Activated CD4-positive, alpha-beta memory T cell treated with anti-CD3 and anti-CD28 coated beads for 36 hours (primary cell): ENCODE measurements at regions of chr20 and their contacts with region 1.

Region 1: DNA sequence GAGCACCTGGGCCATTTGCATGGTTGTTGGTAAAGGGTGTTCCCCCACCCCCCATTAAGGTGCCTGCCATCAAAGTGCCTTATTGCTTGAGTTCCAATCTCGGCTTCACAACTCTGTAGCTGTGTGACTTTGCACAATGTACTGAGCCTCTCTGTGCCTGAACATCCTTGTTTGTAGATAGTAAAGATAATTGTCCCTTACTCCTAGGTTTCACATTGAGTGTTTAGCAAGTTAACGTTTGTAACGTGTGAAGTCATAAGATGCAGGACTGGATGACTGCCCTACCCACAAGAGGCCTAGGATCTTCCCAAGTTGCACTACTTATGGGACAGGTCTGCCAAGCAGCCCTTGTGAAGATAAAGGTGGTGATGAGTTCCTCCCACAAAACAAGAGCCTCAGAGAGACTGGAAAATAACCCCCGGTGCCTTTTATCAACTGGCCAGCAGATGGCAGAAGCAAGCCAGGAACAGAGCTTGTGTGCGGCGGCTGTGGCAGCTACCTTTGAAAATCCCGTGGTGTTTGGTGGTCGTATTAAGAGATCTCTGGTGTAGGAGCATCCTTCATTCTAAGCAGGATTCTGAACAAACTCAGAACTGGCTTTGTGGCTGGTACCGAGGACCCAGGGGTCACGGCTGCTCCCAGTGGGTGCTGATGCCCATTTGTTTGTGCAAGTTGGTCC is 99.0 kb downstream of the CDH26 start:
- DNase-seq: peak; percentile 80
- H3K4me3 Mint-ChIP-seq: peak overlapping the region; percentile 79
- H3K27ac Mint-ChIP-seq: peak overlapping the region; percentile 86
- H3K4me1 Mint-ChIP-seq: peaks cover 40% of the 10 kb centered on the region
- H3K27me3 Mint-ChIP-seq: no peaks in the 10 kb centered on the region

Region 2: GRCh38 chr20:59873409-59873808 is 183.9 kb before region 1 on chr20:
- CTCF ChIA-PET with region 1: no interaction called
- POLR2A ChIA-PET with region 1: no interaction called
- intact Hi-C with region 1: no loop called
- DNase-seq: no peak
- H3K4me3 Mint-ChIP-seq: no peak overlapping the region
- H3K27ac Mint-ChIP-seq: no peak overlapping the region
- H3K4me1 Mint-ChIP-seq: no peaks in the 10 kb centered on the region
- H3K27me3 Mint-ChIP-seq: no peaks in the 10 kb centered on the region

Region 3: DNA sequence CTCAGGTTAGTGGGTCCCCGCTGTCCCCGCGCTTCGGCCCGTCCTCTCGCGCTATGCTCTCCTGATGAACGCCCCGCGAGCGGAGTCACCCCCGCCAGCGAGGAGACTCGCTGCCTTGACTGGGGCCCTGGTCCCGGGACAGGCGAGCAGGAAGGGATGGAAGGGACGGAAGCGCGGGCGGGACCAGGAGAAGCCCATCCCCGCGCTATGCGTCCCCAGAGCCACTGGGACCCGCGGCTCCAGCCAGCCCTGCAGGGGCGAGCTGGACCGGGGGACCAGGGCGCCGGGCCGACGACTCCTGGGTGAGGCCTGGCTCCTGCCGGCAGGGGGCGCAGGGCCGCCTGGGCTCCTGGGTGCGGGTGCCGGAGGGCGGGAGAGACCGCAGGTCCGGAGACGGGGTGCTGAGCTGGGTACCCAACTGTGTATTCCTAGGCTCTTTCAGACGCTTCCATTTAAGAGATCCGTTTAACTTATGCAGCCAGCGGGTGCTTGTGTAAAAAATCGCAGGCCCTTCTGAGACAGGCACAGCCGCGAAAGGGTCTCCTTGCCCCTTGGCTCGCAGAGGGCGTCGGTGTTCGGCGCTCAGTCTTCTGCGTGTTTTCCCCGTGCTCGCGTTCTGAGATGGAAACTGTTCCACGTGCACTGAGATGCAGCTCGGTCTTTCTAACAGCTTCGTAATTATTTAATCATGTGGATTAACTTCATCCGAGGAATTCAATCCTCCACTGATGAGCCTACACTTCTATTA is 123.2 kb before region 1 on chr20:
- CTCF ChIA-PET with region 1: interaction called, 12 read pairs
- POLR2A ChIA-PET with region 1: no interaction called
- intact Hi-C with region 1: no loop called
- DNase-seq: peak; percentile 84
- H3K4me3 Mint-ChIP-seq: peak overlapping the region; percentile 69
- H3K27ac Mint-ChIP-seq: peak overlapping the region; percentile 42
- H3K4me1 Mint-ChIP-seq: peaks cover 31% of the 10 kb centered on the region
- H3K27me3 Mint-ChIP-seq: no peaks in the 10 kb centered on the region

Region 4: GRCh38 chr20:60074276-60074675 is 17.0 kb after region 1 on chr20:
- CTCF ChIA-PET with region 1: interaction called, 11 read pairs
- POLR2A ChIA-PET with region 1: no interaction called
- intact Hi-C with region 1: no loop called
- DNase-seq: no peak
- H3K4me3 Mint-ChIP-seq: no peak overlapping the region
- H3K27ac Mint-ChIP-seq: no peak overlapping the region
- H3K4me1 Mint-ChIP-seq: peaks cover 6% of the 10 kb centered on the region
- H3K27me3 Mint-ChIP-seq: no peaks in the 10 kb centered on the region

Region 5: DNA sequence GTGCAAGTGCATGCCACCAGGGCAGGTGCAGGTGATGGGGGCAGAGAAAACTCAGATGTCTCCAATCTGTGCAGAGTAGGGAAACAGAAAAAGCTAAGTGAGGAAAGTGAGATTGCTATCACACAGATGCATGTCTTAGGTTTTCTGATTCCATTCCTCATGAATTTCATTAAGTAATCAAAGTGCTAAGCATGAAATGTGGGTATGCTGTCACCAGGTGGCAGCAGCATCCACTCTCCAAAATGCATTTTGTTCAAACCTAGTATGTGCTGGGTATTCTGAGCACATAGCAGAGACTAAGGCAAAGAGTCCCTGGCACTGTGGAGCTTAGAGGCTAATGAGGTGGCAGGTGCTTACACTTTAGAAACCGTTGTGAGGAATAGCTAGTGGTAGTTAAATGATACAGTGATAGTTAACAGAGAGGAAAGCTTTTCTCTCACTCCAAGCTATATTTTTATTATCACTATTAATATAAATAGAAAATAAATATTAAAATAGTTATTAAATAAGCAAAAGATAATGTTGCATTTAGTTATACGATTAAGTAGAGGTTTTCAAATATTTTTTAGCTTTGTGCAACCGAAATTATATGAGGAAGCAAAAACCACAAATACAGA is 80.5 kb after region 1 on chr20:
- CTCF ChIA-PET with region 1: interaction called, 20 read pairs
- POLR2A ChIA-PET with region 1: no interaction called
- intact Hi-C with region 1: no loop called
- DNase-seq: peak; percentile 55
- H3K4me3 Mint-ChIP-seq: peak overlapping the region; percentile 60
- H3K27ac Mint-ChIP-seq: no peak overlapping the region
- H3K4me1 Mint-ChIP-seq: no peaks in the 10 kb centered on the region
- H3K27me3 Mint-ChIP-seq: no peaks in the 10 kb centered on the region

Region 6: GRCh38 chr20:60262967-60263603 is 205.8 kb after region 1 on chr20:
- CTCF ChIA-PET with region 1: interaction called, 62 read pairs
- POLR2A ChIA-PET with region 1: no interaction called
- intact Hi-C with region 1: loop called (anchors 1 kb)
- DNase-seq: peak; percentile 66
- H3K4me3 Mint-ChIP-seq: no peak overlapping the region
- H3K27ac Mint-ChIP-seq: no peak overlapping the region
- H3K4me1 Mint-ChIP-seq: peaks cover 14% of the 10 kb centered on the region
- H3K27me3 Mint-ChIP-seq: no peaks in the 10 kb centered on the region

Region 7: DNA sequence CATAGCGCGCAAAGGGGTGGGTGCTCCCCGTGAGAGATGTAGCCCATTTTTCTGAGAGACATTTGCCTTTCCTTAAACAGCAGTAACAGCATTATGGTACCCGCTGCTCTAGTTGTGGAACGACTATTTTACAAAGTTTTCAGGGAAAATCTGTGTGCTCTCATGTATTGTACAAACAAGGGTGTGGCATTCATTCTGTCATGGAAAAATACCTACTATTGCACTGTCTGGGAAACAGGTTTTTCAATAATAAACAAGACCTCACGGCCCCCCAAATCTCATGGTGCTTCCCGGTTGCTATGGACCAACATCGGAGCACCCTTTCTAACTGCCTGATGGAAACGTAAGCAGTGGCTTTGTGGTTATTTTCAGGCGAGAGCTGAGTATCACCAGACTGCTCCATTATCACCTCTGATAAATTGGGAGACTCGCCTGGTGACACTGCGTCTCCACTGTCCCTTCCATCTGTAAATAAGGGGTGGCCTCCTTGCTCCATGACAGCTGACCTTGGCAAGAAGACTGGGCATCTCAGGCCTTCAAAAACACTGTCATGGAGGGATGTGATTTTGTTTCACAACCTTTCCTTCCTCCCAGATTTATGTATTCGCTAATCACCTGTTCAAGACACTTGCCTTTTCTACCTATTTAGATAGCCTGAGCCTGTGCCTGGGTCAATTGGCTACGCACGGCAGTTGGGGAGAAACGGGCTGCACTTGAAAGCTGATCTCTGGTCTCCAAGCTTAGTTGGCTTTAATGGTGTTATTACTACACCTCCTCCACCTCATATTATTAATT is 1176.9 kb after region 1 on chr20:
- CTCF ChIA-PET with region 1: interaction called, 11 read pairs
- POLR2A ChIA-PET with region 1: no interaction called
- intact Hi-C with region 1: no loop called
- DNase-seq: no peak
- H3K4me3 Mint-ChIP-seq: no peak overlapping the region
- H3K27ac Mint-ChIP-seq: no peak overlapping the region
- H3K4me1 Mint-ChIP-seq: no peaks in the 10 kb centered on the region
- H3K27me3 Mint-ChIP-seq: peaks cover 9% of the 10 kb centered on the region